Adrenal gland (tissue), 19 donors: ENCODE measurements at regions of chr19 and their contacts with region 1.

Region 1: DNA sequence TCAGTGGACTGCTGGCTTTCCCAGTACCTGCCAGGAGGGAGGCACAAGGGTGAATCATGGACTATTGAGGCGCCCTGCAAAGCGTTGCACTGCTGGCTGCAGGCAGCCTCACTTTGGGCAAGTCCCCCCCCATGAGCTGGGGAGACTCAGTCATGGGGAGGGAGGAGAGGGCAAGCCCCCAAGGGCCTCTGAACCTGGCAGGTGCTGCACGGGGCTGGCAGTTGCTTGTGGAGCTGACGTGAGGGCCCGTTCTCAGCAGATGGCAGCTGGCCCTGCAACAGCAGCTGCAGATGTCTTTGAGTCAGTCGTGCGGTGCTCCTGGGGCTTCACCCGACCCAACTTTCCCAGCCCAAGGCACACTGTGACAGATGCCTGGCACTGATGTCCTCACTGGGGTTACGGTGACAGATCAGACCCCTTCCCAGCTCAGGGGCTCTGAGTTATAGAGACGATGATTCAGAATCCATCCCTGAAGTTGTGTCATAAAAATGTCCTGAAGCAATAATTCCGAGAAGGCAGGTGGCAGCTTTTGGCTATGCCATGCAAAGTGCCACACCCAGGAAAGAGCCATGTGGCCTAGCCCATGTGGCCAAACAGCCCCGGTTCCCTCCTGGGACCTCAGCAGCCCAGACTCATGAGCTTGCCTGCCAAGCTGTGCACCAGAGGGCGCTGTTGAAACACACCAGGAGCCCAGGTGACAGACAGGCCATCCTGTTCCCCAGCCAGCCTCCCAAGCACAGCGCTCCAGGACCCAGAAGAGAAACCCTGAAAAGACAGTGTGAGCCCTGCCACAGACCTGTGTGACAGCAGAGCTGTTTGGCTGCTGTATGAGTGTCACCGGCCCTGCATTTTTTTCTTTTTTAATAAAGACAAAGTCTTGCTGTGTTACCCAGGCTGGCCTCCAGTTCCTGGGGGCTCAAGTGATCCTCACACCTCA is 53.6 kb upstream of the LDLR start:
- DNase-seq: peak; percentile 93 to 99 (median 97)
- H3K4me3 ChIP-seq: no peak overlapping the region
- H3K27ac ChIP-seq: peak overlapping the region in 4 of 5 donors; percentile 18 to 80 (median 56)
- H3K4me1 ChIP-seq: peaks cover 0 to 7% of the 10 kb centered on the region in 2 donors
- H3K27me3 ChIP-seq: no peaks in the 10 kb centered on the region
- CTCF ChIP-seq: peak; percentile 74 to 96 (median 93)
- POLR2A ChIP-seq: peak in 1 of 2 donors; percentile 13

Region 2: DNA sequence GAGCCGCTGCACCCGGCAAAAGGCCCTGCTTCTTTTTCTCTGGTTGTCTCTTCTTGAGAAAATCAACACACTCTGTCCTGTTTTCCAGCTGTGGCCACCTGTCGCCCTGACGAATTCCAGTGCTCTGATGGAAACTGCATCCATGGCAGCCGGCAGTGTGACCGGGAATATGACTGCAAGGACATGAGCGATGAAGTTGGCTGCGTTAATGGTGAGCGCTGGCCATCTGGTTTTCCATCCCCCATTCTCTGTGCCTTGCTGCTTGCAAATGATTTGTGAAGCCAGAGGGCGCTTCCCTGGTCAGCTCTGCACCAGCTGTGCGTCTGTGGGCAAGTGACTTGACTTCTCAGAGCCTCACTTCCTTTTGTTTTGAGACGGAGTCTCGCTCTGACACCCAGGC is 70.8 kb after region 1 on chr19:
- intact Hi-C with region 1: loop called in 1 of 2 experiments (anchors 10 kb)
- DNase-seq: peak in 3 of 7 donors; percentile 54 to 80 (median 63)
- H3K4me3 ChIP-seq: no peak overlapping the region
- H3K27ac ChIP-seq: peak overlapping the region in 4 of 5 donors; percentile 24 to 75 (median 43)
- H3K4me1 ChIP-seq: no peaks in the 10 kb centered on the region
- H3K27me3 ChIP-seq: no peaks in the 10 kb centered on the region
- CTCF ChIP-seq: no peak
- POLR2A ChIP-seq: no peak

Region 3: DNA sequence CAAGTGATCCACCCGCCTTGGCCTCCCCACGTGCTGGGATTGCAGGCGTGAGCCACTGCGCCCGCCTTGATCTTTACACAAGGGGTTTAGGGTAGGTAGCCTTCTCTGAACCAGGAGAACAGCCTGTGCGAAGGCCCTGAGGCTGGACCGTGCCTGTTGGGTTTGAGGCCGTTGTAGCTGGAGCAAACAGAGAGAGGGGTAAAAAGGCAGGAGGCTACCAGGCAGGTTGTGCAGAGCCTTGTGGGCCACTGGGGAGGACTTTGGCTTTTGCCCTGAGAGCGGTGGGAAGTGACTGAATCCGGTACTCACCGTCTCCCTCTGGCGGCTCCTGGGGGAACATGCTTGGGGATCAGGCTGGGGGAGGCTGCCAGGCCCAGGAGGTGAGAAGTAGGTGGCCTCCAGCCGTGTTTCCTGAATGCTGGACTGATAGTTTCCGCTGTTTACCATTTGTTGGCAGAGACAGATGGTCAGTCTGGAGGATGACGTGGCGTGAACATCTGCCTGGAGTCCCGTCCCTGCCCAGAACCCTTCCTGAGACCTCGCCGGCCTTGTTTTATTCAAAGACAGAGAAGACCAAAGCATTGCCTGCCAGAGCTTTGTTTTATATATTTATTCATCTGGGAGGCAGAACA is 95.2 kb after region 1 on chr19:
- intact Hi-C with region 1: loop called in 1 of 2 experiments (anchors 5 kb)
- DNase-seq: peak; percentile 81 to 96 (median 88)
- H3K4me3 ChIP-seq: no peak overlapping the region
- H3K27ac ChIP-seq: peak overlapping the region; percentile 44 to 78 (median 71)
- H3K4me1 ChIP-seq: peaks cover 0 to 7% of the 10 kb centered on the region in 2 donors
- H3K27me3 ChIP-seq: no peaks in the 10 kb centered on the region
- CTCF ChIP-seq: peak; percentile 75 to 95 (median 86)
- POLR2A ChIP-seq: peak in 1 of 2 donors; percentile 4

Region 4: DNA sequence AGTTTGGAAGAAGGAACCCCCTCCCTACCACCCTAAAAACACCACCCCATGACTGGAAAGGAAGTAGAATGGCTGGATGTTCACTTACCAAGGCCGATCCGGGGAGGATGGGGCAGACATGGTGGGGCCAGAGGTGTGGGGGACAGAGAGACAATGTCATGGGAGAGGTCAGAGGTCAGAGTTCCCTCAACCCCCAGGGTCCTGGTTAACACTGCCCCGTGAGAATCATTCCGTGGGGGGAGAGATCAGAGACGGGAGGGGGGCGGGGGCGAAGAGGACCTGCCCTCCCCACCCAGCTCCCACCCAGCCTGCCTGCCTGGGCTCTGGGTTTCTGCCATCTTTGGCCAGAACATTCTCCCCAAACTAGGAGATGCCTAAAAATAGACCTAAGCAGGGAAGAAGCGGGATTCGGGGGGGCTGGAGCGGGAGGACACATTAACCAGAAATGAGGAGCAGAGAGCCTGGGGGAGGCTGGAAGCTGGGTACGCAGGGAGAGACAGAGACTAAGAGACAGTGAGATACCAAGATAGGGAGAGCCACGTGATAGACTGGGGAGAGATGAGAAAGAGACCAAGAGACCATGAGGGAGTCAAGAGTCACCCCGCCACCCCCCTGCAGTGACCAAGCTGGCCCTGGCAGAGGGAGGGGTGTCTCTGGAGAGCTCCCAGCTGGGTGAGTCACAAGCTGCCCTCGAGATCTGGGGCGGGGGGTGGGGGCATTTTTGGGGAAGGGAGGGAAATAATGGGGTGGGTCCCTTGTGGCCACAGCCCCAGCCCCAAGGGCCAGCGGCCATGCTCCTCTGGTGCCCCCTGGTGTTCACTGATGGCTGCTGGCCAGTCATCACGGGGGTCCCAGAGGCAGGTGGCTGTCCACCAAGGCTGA is 167.7 kb after region 1 on chr19:
- intact Hi-C with region 1: loop called (anchors 10 kb)
- DNase-seq: peak; percentile 88 to 96 (median 95)
- H3K4me3 ChIP-seq: no peak overlapping the region
- H3K27ac ChIP-seq: peak overlapping the region in 4 of 5 donors; percentile 76 to 93 (median 90)
- H3K4me1 ChIP-seq: peaks cover 20 to 40% of the 10 kb centered on the region in 2 donors
- H3K27me3 ChIP-seq: no peaks in the 10 kb centered on the region
- CTCF ChIP-seq: peak; percentile 79 to 91 (median 84)
- POLR2A ChIP-seq: peak in 1 of 2 donors; percentile 51